Activated naive CD4-positive, alpha-beta T cell treated with anti-CD3 and anti-CD28 coated beads for 36 hours (primary cell): ENCODE measurements at regions of chr4 and their contacts with region 1.

Region 1: GRCh38 chr4:145315811-145316225 is 135.4 kb upstream of the OTUD4 start:
- DNase-seq: no peak
- H3K4me3 Mint-ChIP-seq: no peak overlapping the region
- H3K27ac Mint-ChIP-seq: no peak overlapping the region
- H3K4me1 Mint-ChIP-seq: peaks cover under 1% of the 10 kb centered on the region
- H3K27me3 Mint-ChIP-seq: peaks cover 22% of the 10 kb centered on the region

Region 2: GRCh38 chr4:145180298-145181090 is 135.3 kb before region 1 on chr4 and contains the start of gene OTUD4:
- CTCF ChIA-PET with region 1: no interaction called
- intact Hi-C with region 1: no loop called
- DNase-seq: peak; percentile 96
- H3K4me3 Mint-ChIP-seq: peak within 1 kb of the TSS; percentile 93
- H3K27ac Mint-ChIP-seq: peak within 1 kb of the TSS; percentile 98
- H3K4me1 Mint-ChIP-seq: peaks cover 29% of the 10 kb centered on the region
- H3K27me3 Mint-ChIP-seq: no peaks in the 10 kb centered on the region
- total RNA-seq, gene OTUD4: 35.9 to 37.1 TPM

Region 3: GRCh38 chr4:145339075-145339725 is 23.4 kb after region 1 on chr4:
- CTCF ChIA-PET with region 1: no interaction called
- intact Hi-C with region 1: loop called (anchors 1 kb)
- DNase-seq: no peak
- H3K4me3 Mint-ChIP-seq: no peak overlapping the region
- H3K27ac Mint-ChIP-seq: no peak overlapping the region
- H3K4me1 Mint-ChIP-seq: no peaks in the 10 kb centered on the region
- H3K27me3 Mint-ChIP-seq: peaks cover 3% of the 10 kb centered on the region

Region 4: DNA sequence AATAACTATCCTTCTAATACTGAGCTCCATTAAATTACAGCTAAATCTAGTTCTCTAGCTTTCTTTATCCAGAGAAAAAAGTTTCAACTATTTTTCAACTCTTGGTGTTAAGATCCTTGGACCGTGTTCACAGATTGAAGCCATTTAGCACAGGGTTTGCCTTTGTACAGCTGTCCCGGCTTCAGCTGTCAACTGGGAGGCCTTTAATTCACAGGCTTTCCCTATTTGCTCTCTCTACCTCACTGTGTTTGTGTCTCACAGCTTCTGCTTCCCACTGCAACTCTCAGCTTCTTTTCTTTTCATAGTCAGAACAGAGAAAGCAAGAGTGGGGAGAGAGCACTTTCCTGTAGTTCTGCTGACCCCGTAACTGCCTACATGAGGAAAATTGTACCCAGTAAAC is 88.9 kb after region 1 on chr4:
- CTCF ChIA-PET with region 1: no interaction called
- intact Hi-C with region 1: no loop called
- DNase-seq: no peak
- H3K4me3 Mint-ChIP-seq: no peak overlapping the region
- H3K27ac Mint-ChIP-seq: no peak overlapping the region
- H3K4me1 Mint-ChIP-seq: no peaks in the 10 kb centered on the region
- H3K27me3 Mint-ChIP-seq: peaks cover 7% of the 10 kb centered on the region